ENCODE measurements at regions of chr1 and their contacts with region 1.

Region 1: GRCh38 chr1:84387480-84388163 is 10.7 kb upstream of the DNASE2B start:
- DNase-seq: peak; percentile 43
- H3K4me3 ChIP-seq: no peak overlapping the region
- H3K27ac ChIP-seq: no peak overlapping the region
- H3K4me1 ChIP-seq: no peaks in the 10 kb centered on the region
- H3K27me3 ChIP-seq: no peaks in the 10 kb centered on the region
- CTCF ChIP-seq: peak; percentile 54

Region 2: DNA sequence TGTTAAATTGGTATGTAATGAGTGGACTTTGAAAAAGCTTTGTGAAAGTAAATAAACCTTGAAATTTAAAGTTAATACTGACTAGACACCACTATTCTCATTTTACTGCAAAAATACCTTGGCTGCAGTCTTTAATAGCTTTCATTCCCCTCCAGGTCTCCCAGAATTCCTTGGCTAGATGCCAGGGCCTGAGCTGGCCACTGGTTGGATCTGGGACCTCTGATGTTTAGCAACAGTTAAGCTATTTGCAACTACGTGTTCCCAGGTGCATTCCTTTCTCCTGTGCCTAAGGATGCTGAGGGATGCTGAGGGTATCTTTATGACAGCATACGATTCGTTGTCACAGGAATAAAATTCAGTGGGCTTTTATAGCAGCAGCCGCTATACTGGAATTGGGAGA is 1327.4 kb before region 1 on chr1:
- CTCF ChIA-PET with region 1: no interaction called
- POLR2A ChIA-PET with region 1: interaction called, 11 read pairs
- intact Hi-C with region 1: no loop called
- DNase-seq: no peak
- H3K4me3 ChIP-seq: no peak overlapping the region
- H3K27ac ChIP-seq: no peak overlapping the region
- H3K4me1 ChIP-seq: no peaks in the 10 kb centered on the region
- H3K27me3 ChIP-seq: no peaks in the 10 kb centered on the region
- CTCF ChIP-seq: no peak